ENCODE measurements at regions of chr7 and their contacts with region 1.

Region 1: DNA sequence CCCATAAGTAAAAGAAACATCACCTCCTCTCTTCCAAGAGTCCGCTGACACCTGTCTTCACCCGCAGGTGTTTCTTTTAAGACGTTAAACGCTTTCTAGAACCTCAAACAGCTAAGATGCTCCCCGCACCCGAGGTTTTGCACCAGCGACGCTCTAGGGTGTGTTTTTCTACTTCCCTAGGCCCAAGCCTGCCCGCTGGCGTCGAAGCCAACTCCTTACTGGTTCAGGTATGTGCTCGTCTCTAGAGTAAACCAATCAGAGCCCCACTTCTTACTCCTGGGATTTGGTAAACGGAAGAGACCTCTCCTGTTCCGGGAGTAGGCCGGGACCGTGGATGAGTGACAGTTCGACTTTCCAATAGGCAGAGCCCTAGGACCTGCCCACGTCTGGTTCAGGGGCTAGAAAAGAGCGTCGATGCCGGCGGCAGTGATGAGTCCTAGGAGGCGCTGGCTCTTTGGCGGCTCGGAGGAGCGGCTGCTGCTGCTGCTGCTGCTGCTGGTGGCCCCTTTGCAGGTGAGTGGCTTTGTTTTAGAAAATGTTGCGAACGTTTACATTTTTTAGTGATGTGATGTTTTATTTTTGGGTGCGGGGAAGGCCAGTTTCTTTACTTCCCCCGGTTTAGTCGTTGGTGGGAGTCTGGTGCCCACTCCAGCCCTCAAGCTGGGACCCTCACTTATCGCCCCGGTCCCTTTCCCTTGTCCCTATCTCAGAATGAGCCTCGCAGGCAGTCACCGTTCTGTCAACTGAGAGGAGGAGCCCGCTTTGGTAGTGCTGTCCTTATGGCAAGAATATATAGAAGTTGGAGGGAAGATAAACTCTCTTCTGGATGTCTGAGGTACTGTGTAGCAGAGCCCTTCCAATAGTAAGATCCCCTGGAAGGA is at the start of gene BPGM:
- DNase-seq: peak; percentile 98
- H3K4me3 Mint-ChIP-seq: no peak within 1 kb of the TSS
- H3K27ac Mint-ChIP-seq: no peak within 1 kb of the TSS
- H3K4me1 Mint-ChIP-seq: peaks cover 32% of the 10 kb centered on the region
- H3K27me3 Mint-ChIP-seq: no peaks in the 10 kb centered on the region
- total RNA-seq, gene BPGM: 23.7 to 24.9 TPM

Region 2: DNA sequence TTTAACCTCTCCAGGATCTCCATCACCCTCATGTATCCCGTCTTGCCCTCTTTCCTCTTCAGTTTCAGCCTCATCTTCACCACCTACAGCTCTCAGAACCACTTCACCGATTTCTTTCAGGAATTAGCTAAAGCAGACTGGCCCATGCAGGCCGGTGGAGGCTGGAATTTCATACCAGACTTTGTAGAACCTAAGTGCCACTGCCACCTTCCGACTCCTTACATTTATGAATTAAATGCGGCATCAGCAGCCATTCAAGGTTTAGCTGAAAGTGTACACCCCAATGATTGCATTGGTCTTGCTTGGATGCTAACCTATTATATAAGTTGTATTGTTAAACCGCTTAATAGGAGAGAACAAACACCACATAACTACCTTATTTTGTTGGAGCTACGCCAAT is 154.7 kb before region 1 on chr7:
- CTCF ChIA-PET with region 1: no interaction called
- POLR2A ChIA-PET with region 1: no interaction called
- intact Hi-C with region 1: no loop called
- DNase-seq: no peak
- H3K4me3 Mint-ChIP-seq: no peak overlapping the region
- H3K27ac Mint-ChIP-seq: no peak overlapping the region
- H3K4me1 Mint-ChIP-seq: no peaks in the 10 kb centered on the region
- H3K27me3 Mint-ChIP-seq: peaks cover 7% of the 10 kb centered on the region

Region 3: GRCh38 chr7:134502463-134503371 is 143.9 kb before region 1 on chr7:
- CTCF ChIA-PET with region 1: no interaction called
- POLR2A ChIA-PET with region 1: no interaction called
- intact Hi-C with region 1: no loop called
- DNase-seq: no peak
- H3K4me3 Mint-ChIP-seq: no peak overlapping the region
- H3K27ac Mint-ChIP-seq: no peak overlapping the region
- H3K4me1 Mint-ChIP-seq: no peaks in the 10 kb centered on the region
- H3K27me3 Mint-ChIP-seq: peaks cover 11% of the 10 kb centered on the region

Region 4: GRCh38 chr7:134632937-134633540 is 13.6 kb before region 1 on chr7:
- CTCF ChIA-PET with region 1: interaction called, 18 read pairs
- POLR2A ChIA-PET with region 1: interaction called, 14 read pairs
- intact Hi-C with region 1: loop called (anchors 1 kb)
- DNase-seq: peak; percentile 29
- H3K4me3 Mint-ChIP-seq: no peak overlapping the region
- H3K27ac Mint-ChIP-seq: no peak overlapping the region
- H3K4me1 Mint-ChIP-seq: peaks cover 23% of the 10 kb centered on the region
- H3K27me3 Mint-ChIP-seq: peaks cover 13% of the 10 kb centered on the region

Region 5: GRCh38 chr7:134710859-134711624 is 64.4 kb after region 1 on chr7:
- CTCF ChIA-PET with region 1: interaction called, 3 read pairs
- POLR2A ChIA-PET with region 1: no interaction called
- intact Hi-C with region 1: loop called (anchors 1 kb)
- DNase-seq: peak; percentile 78
- H3K4me3 Mint-ChIP-seq: peak overlapping the region; percentile 76
- H3K27ac Mint-ChIP-seq: peak overlapping the region; percentile 97
- H3K4me1 Mint-ChIP-seq: peaks cover 30% of the 10 kb centered on the region
- H3K27me3 Mint-ChIP-seq: no peaks in the 10 kb centered on the region

Region 6: DNA sequence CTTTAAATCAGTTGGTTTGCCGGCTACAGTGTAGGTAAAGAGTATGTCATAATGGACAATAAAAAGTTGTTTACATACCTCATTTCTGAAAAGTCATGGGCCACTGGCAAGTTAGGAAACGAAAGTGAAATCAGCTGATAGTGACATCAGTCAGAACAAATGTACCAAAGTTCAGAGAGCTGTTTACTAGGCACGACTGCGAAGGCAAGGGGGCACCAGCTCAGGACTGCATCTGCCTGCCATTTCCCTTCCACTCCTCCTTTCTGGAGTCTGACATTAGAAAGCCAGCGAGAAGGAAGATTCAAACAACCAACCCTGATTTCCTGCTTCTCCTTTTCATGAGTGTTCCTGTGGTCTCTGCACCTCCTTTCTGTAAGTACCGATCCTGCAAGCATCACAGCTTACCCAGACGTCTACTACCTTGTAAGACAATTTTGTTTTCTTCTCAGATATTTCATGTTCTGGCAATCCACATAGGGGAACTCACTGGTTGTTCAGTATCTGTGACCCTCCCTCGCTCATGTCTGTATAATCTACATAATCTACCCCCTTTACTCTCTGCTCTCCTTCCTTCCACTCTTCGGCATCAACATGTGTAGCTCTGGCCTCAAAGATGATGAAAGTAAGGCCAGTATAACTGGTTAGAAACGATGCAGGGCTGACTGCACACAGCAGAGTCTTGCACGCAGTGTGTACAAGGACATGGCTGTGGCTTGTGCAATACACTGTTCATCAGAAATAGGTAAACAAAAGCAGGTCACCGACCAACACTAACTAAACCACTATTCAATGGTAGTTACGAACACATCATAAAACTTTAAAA is 501.4 kb after region 1 on chr7 and contains the start of gene TMEM140:
- CTCF ChIA-PET with region 1: no interaction called
- POLR2A ChIA-PET with region 1: interaction called, 3 read pairs
- intact Hi-C with region 1: loop called (anchors 1 kb)
- DNase-seq: peak; percentile 73
- H3K4me3 Mint-ChIP-seq: peak within 1 kb of the TSS; percentile 83
- H3K27ac Mint-ChIP-seq: peak within 1 kb of the TSS; percentile 95
- H3K4me1 Mint-ChIP-seq: peaks cover 60% of the 10 kb centered on the region
- H3K27me3 Mint-ChIP-seq: no peaks in the 10 kb centered on the region
- total RNA-seq, gene TMEM140: 8.6 to 10.0 TPM

Region 7: GRCh38 chr7:135558337-135558767 is 911.7 kb after region 1 on chr7:
- CTCF ChIA-PET with region 1: no interaction called
- POLR2A ChIA-PET with region 1: no interaction called
- intact Hi-C with region 1: loop called (anchors 1 kb)
- DNase-seq: peak; percentile 79
- H3K4me3 Mint-ChIP-seq: no peak overlapping the region
- H3K27ac Mint-ChIP-seq: no peak overlapping the region
- H3K4me1 Mint-ChIP-seq: peaks cover 16% of the 10 kb centered on the region
- H3K27me3 Mint-ChIP-seq: no peaks in the 10 kb centered on the region

Measured in activated CD4-positive, alpha-beta memory T cell treated with anti-CD3 and anti-CD28 coated beads for 36 hours (primary cell).